ENCODE measurements at regions of chr12 and their contacts with region 1.

Region 1: GRCh38 chr12:71838676-71839075 is 883 bp upstream of the TBC1D15 start:
- H3K4me3 Mint-ChIP-seq: peak overlapping the region; percentile 88
- H3K27ac Mint-ChIP-seq: peak overlapping the region; percentile 94
- H3K4me1 Mint-ChIP-seq: peaks cover 30% of the 10 kb centered on the region
- H3K27me3 Mint-ChIP-seq: no peaks in the 10 kb centered on the region

Region 2: DNA sequence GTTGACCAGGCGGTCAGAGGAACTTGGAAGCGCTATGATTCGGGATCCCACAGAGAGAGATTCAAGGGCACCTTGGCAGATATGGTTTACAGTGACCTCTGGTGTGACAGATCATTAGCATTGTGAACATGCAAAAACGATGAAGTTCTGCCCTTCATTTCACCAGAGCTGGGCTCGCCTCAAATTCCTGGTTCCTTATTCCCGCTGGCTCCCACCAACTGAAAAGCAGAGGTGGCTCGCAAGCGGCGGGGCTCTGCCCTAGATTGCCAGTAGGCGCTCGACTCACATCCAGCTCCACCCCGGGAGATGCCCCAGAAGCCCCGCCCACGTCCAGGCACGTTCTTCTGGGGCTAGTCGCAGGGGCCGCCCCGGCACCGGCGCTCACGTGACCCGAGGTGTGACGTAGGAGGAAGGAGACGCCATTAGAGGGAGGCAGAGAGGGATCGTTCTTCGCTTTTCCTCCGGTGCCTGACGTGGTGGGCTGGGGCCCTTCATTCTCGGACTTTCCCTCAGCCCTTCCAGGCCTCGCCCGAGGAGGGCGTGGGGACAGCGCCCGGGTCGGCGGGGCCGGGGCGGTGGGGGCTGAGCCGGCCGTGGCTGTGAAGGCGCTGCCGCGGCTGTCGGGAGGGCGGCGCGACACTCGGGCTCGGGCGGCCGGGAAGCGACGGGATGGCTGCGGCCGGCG is 84.1 kb before region 1 on chr12 and contains the start of gene RAB21:
- intact Hi-C with region 1: loop called (anchors 1 kb)
- H3K4me3 Mint-ChIP-seq: peak within 1 kb of the TSS; percentile 82
- H3K27ac Mint-ChIP-seq: peak within 1 kb of the TSS; percentile 94
- H3K4me1 Mint-ChIP-seq: peaks cover 16% of the 10 kb centered on the region
- H3K27me3 Mint-ChIP-seq: peaks cover 7% of the 10 kb centered on the region

Region 3: GRCh38 chr12:71799106-71799505 is 39.6 kb before region 1 on chr12:
- intact Hi-C with region 1: loop called (anchors 1 kb)
- H3K4me3 Mint-ChIP-seq: no peak overlapping the region
- H3K27ac Mint-ChIP-seq: peak overlapping the region; percentile 85
- H3K4me1 Mint-ChIP-seq: peaks cover 23% of the 10 kb centered on the region
- H3K27me3 Mint-ChIP-seq: no peaks in the 10 kb centered on the region

Measured in dendritic cell treated with granulocyte-macrophage colony-stimulating factor and Interleukin-4, amounts not matched to agents 40 ng/mL and 50 ng/mL, for 4 days (primary cell).